Caco-2 (cell line): ENCODE measurements at regions of chr4 and their contacts with region 1.

Region 1: GRCh38 chr4:159446266-159446976 is 343.5 kb downstream of the RAPGEF2 start:
- DNase-seq: peak; percentile 46 to 48
- H3K4me3 ChIP-seq: no peak overlapping the region
- H3K4me3 Mint-ChIP-seq: no peak overlapping the region
- H3K27ac Mint-ChIP-seq: no peak overlapping the region
- H3K4me1 ChIP-seq: no peaks in the 10 kb centered on the region
- H3K4me1 Mint-ChIP-seq: no peaks in the 10 kb centered on the region
- H3K27me3 ChIP-seq: no peaks in the 10 kb centered on the region
- H3K27me3 Mint-ChIP-seq: no peaks in the 10 kb centered on the region
- CTCF ChIP-seq: peak; percentile 72 to 87

Region 2: DNA sequence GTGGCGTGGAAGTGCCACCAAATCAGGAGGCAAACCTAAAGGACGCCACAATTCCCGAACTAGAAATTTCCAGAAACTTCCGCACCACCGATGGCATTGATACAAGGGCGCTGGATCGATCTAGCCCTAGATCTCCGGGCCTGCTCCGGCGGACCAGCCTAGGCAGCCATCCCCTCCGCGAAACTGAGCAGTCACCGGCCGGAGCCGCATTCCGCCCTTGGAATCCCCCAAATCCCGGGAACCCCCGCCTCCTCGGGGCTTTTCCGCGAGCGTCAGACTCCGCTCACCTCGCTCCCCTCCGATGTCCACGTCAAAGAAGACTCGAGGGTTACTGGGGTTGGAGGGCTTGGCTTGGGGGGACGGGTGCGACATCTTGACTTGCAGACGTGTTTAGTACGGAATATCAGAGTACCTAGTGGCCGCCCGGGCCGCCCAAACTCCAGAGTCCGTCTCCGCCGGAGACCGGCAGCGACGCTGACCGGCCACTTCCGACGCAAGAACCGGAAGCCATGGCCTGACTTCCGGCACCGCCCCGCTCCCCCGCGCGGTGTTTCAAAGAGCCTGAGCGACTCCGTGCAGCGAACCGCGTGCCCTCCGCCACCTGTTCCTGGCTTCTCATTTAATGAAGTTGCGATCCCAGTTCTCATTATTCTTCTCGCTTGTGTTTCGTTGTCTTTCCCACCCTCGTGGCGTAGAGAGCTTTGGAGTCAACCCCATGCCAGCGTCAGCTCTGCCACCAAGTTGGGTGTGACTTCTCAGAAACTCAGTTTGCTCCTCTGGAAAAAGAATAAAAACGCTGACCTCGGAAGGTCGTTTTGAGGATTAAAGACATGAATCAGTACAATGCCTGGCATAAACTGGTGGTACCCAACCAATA is 723.3 kb before region 1 on chr4 and contains the start of gene PPID:
- CTCF ChIA-PET with region 1: no interaction called
- POLR2A ChIA-PET with region 1: no interaction called
- intact Hi-C with region 1: loop called (anchors 2 kb)
- DNase-seq: peak; percentile 85 to 88
- H3K4me3 ChIP-seq: peak within 1 kb of the TSS; percentile 68
- H3K4me3 Mint-ChIP-seq: peak within 1 kb of the TSS; percentile 90
- H3K27ac Mint-ChIP-seq: peak within 1 kb of the TSS; percentile 95
- H3K4me1 ChIP-seq: peaks cover 6% of the 10 kb centered on the region
- H3K4me1 Mint-ChIP-seq: peaks cover 9% of the 10 kb centered on the region
- H3K27me3 ChIP-seq: no peaks in the 10 kb centered on the region
- H3K27me3 Mint-ChIP-seq: no peaks in the 10 kb centered on the region
- CTCF ChIP-seq: no peak
- total RNA-seq, gene PPID: 50.9 and 57.2 TPM in 2 replicates

Region 3: GRCh38 chr4:159201168-159201567 is 245.3 kb before region 1 on chr4:
- CTCF ChIA-PET with region 1: no interaction called
- POLR2A ChIA-PET with region 1: no interaction called
- intact Hi-C with region 1: loop called (anchors 5 kb)
- DNase-seq: no peak
- H3K4me3 ChIP-seq: no peak overlapping the region
- H3K4me3 Mint-ChIP-seq: no peak overlapping the region
- H3K27ac Mint-ChIP-seq: no peak overlapping the region
- H3K4me1 ChIP-seq: no peaks in the 10 kb centered on the region; the same call in 1 of the 2 replicates
- H3K4me1 Mint-ChIP-seq: peaks cover 28% of the 10 kb centered on the region
- H3K27me3 ChIP-seq: no peaks in the 10 kb centered on the region
- H3K27me3 Mint-ChIP-seq: no peaks in the 10 kb centered on the region
- CTCF ChIP-seq: no peak

Region 4: DNA sequence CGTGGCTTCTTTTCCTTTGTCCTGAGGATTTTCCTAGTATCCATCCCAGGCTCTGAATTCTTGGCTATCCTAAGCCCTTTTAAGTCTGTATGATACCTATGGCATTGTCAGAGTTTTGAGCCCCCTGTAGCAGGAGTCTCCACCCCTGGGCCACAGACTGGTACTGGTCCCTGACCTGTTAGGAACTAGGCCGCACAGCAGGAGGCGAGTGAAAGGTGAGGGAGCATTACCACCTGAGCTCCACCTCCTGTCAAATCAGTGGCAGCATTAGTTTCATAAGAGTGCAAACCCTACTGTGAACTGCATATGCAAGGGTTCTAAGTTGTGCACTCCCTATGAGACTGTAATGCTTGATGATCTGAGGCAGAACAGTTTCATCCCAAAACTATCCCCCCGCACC is 127.4 kb before region 1 on chr4:
- CTCF ChIA-PET with region 1: no interaction called
- POLR2A ChIA-PET with region 1: no interaction called
- intact Hi-C with region 1: loop called (anchors 1 kb)
- DNase-seq: no peak
- H3K4me3 ChIP-seq: no peak overlapping the region
- H3K4me3 Mint-ChIP-seq: no peak overlapping the region
- H3K27ac Mint-ChIP-seq: no peak overlapping the region
- H3K4me1 ChIP-seq: no peaks in the 10 kb centered on the region
- H3K4me1 Mint-ChIP-seq: peaks cover 7% of the 10 kb centered on the region
- H3K27me3 ChIP-seq: no peaks in the 10 kb centered on the region
- H3K27me3 Mint-ChIP-seq: no peaks in the 10 kb centered on the region
- CTCF ChIP-seq: no peak

Region 5: GRCh38 chr4:159649237-159649636 is 202.8 kb after region 1 on chr4:
- CTCF ChIA-PET with region 1: no interaction called
- POLR2A ChIA-PET with region 1: no interaction called
- intact Hi-C with region 1: no loop called
- DNase-seq: no peak
- H3K4me3 ChIP-seq: no peak overlapping the region
- H3K4me3 Mint-ChIP-seq: no peak overlapping the region
- H3K27ac Mint-ChIP-seq: no peak overlapping the region
- H3K4me1 ChIP-seq: no peaks in the 10 kb centered on the region
- H3K4me1 Mint-ChIP-seq: no peaks in the 10 kb centered on the region
- H3K27me3 ChIP-seq: no peaks in the 10 kb centered on the region
- H3K27me3 Mint-ChIP-seq: no peaks in the 10 kb centered on the region
- CTCF ChIP-seq: no peak